ENCODE measurements at regions of chr16 and their contacts with region 1.

Region 1: DNA sequence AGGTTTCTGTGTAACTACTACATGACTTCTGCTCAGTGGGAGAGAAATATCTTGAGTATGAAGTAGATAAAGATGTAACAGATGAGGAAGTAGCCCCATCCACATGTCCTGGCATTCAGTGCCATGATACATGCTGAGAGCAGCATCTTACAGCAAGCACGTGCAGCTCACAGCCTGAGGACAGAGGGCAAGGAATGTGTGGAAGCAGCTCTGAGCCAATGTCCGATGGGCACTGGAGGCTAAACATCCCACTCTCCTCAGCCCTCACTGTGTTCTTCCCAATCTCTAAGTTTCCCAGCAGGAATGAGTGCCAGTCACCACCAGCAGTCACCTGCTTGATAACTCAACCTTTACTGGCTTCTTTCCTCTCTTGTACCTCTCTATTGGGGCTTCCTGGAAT is 40.4 kb downstream of the CFDP1 start:
- DNase-seq: no peak
- H3K4me3 ChIP-seq: no peak overlapping the region
- H3K27ac ChIP-seq: no peak overlapping the region
- H3K4me1 ChIP-seq: no peaks in the 10 kb centered on the region
- CTCF ChIP-seq: no peak

Region 2: GRCh38 chr16:75402821-75403475 is 10.0 kb after region 1 on chr16:
- CTCF ChIA-PET with region 1: interaction called, 3 read pairs
- POLR2A ChIA-PET with region 1: interaction called, 10 read pairs
- intact Hi-C with region 1: no loop called
- DNase-seq: peak; percentile 42
- H3K4me3 ChIP-seq: no peak overlapping the region
- H3K27ac ChIP-seq: no peak overlapping the region
- H3K4me1 ChIP-seq: no peaks in the 10 kb centered on the region
- CTCF ChIP-seq: peak; percentile 88

Region 3: GRCh38 chr16:75471723-75472633 is 79.1 kb after region 1 on chr16:
- CTCF ChIA-PET with region 1: no interaction called
- POLR2A ChIA-PET with region 1: no interaction called
- intact Hi-C with region 1: no loop called
- DNase-seq: peak; percentile 58
- H3K4me3 ChIP-seq: no peak overlapping the region
- H3K27ac ChIP-seq: no peak overlapping the region
- H3K4me1 ChIP-seq: no peaks in the 10 kb centered on the region
- CTCF ChIP-seq: peak; percentile 88